PC-9 (cell line): ENCODE measurements at regions of chr22 and their contacts with region 1.

Region 1: GRCh38 chr22:37043828-37044538 is 7.6 kb upstream of the KCTD17 start:
- DNase-seq: peak; percentile 74 to 80
- H3K4me3 ChIP-seq: no peak overlapping the region
- H3K27ac ChIP-seq: no peak overlapping the region
- H3K4me1 ChIP-seq: peaks cover 38% of the 10 kb centered on the region
- H3K27me3 ChIP-seq: no peaks in the 10 kb centered on the region
- CTCF ChIP-seq: peak; percentile 93

Region 2: DNA sequence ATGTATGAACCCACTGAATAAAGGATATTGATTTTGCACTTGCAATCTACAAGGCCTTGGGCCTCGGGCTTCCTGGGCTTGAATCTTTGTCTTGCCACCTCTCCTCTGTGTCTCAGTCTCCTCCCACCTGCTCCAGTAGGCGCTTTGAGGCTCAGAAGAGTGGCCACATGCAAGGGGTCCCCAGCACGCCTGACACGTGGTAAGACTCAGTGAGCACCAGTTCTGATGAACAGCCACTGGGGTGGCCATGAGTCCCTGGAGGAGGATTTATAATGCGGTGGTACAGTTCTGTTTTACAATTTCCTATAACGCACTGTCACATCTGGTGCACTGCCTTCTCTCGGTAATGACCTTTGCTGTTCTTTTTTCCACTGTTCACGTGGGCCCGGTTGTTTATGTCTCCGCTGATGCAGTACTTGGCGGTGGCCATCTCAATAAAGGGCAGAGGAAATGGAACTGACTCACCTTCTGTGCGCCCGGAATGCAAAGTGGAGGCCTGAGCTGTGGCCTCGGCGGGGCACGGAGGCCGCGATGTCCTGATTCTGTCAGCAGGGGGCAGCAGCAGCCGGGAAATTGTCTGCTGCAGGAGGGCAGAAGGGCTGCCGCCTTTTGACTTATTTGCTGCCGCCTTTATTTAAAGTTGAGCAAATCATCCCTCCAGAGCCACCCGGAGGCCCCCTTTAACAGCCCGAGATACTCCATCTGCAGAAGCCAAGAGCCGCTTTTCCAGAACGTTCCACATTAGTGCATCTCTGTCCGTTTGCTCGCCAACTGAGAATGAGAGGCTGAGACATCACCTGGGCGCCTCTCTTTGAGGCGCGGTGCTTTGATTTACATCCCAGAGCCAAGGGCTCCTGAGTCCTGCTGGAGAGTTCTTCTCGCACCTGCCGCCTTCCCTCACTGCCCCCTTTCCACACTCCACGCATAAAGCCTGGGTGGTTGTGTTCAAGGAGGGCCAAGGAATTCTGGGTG is 262.0 kb before region 1 on chr22:
- CTCF ChIA-PET with region 1: no interaction called
- POLR2A ChIA-PET with region 1: no interaction called
- intact Hi-C with region 1: loop called (anchors 1 kb)
- DNase-seq: peak; percentile 80 to 93
- H3K4me3 ChIP-seq: no peak overlapping the region
- H3K27ac ChIP-seq: no peak overlapping the region
- H3K4me1 ChIP-seq: peaks cover 5% of the 10 kb centered on the region
- H3K27me3 ChIP-seq: peaks cover 9% of the 10 kb centered on the region
- CTCF ChIP-seq: peak; percentile 99